Caco-2 (cell line): ENCODE measurements at regions of chr12 and their contacts with region 1.

Region 1: DNA sequence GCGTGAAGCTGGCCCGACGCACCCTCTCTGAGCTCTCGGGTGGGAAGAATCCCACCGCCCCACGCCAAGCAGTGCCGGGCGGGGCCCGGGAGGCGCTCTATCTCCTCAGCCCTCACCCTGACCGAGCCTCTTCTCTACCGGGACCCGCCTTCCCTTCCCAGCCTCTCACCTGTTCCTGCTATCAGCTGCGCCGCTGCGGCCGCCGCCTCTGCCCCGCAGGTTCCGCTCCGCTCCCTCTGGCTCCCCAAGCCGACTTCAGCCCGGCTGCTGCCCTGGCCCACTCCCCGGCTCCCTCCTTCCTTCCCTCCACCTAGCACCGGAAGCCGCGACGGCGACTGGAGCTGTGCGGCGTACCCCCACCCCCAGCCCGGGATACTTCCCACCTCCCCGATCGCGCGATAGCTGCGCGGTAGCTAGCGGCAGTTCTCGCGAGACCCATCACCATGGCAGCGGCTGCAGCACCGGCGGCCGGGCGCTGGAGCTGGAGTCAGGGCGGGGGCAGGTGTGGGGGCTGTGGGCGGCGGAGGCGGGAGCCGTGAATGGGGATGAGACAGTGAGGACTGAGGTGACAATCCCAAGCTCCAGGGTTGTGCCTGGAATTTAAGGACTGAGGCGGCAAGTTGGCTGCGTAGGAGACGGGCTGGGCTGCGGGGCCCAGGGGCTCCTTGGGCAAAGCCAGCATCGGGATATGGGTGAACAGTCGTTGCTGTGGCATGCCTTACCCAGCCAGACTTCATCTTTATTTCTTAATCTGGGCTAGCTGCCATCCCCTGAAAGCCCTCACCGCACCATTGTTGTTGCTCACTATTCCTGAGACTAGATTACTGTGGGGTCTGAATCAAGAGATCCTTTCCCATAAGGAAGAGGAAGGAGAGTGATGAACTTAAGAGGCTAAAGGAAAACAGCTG is at the start of gene ARF3:
- DNase-seq: peak; percentile 97 to 98
- H3K4me3 ChIP-seq: peak within 1 kb of the TSS; percentile 79
- H3K4me3 Mint-ChIP-seq: peak within 1 kb of the TSS; percentile 89
- H3K27ac Mint-ChIP-seq: peak within 1 kb of the TSS; percentile 87
- H3K4me1 ChIP-seq: peaks cover 8% of the 10 kb centered on the region; the same call in 1 of the 2 replicates
- H3K4me1 Mint-ChIP-seq: peaks cover 13% of the 10 kb centered on the region
- H3K27me3 ChIP-seq: no peaks in the 10 kb centered on the region
- H3K27me3 Mint-ChIP-seq: no peaks in the 10 kb centered on the region
- CTCF ChIP-seq: no peak
- total RNA-seq, gene ARF3: 249 and 257 TPM in 2 replicates

Region 2: DNA sequence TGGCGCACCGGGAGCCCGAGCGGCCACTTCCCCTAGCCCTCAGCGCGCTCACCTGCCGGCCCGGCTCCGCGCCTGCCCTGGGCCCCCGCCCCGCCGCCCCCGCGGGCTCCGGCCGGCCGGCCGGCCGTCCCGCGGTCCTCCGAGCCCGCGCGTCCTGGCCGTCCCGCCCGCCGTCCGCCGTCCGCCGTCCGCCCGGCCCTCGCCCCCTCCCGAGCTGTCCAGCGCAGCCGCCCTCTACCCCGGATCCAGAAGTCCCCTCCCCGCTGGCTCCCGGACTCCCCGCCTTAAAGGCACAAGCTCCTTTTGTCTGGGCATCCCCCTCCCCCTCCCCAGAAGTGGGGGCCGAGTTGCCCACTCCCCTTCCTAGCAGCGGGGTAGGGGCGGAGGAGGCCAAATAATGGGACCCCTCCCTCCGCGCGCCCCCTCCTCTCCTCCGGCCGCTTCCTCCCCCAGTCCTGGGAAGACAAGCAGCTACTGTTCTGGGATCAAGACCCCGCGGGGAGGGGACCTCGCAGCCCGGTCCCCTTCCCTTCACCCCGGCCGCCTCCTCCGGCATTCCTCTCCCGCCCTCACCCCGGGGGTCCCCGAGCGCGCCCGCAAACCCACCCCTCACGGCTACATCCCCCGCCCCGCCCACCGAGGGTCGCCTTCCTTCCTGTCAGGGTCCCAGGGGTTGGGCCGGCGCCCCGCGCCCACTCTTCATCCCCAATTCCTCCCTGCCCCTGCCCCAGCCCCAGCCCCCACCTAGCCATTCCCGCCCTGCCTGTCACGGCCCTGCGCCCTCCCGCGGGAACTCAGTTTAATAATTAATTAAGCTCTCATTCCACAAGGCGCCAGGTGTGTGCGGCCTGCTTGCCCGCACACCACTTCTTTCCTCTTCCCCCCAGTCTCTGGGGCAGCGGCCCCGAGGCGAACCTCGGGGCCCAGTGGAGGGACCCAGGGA is 168.3 kb before region 1 on chr12 and contains the start of gene ADCY6:
- CTCF ChIA-PET with region 1: no interaction called
- POLR2A ChIA-PET with region 1: interaction called, 11 read pairs
- intact Hi-C with region 1: no loop called
- DNase-seq: peak; percentile 94
- H3K4me3 ChIP-seq: peak within 1 kb of the TSS; percentile 88
- H3K4me3 Mint-ChIP-seq: peak within 1 kb of the TSS; percentile 84
- H3K27ac Mint-ChIP-seq: peak within 1 kb of the TSS; percentile 91
- H3K4me1 ChIP-seq: peaks cover 29% of the 10 kb centered on the region
- H3K4me1 Mint-ChIP-seq: peaks cover 13% of the 10 kb centered on the region
- H3K27me3 ChIP-seq: no peaks in the 10 kb centered on the region
- H3K27me3 Mint-ChIP-seq: no peaks in the 10 kb centered on the region
- CTCF ChIP-seq: no peak
- total RNA-seq, gene ADCY6: 89.8 and 92.9 TPM in 2 replicates

Region 3: DNA sequence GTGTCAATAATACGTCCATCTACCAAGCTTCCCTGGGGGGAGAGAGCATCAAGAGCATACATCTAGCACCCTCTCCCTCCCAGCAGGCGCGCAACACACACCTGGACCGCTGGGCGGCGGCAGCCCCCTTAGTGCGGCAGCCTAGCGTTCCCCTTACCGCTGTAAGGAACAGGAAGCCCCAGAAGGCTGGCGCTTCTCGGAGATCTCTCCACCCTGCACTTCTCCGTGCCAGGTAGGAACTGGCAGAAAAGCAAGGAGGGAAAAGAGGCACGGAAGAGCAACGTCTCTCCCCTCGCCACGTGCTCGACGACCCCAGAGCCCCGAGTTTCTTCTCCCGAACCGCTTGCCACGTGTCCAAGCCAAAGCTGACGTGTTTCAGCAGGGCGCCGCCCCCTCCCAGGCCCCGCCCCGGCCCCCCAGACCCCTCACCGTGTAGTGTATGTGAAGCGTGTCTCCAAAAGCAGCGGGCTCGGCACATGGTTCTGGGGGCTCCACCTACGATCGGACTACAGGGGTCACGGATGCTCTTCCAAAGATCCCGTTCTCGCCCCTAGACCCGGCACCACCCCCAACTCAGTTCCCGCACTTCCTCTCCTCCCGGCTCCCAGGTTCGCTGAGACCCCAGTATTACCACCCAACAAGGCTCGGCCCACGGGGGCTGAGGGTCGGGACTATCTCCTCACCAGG is 32.6 kb before region 1 on chr12:
- CTCF ChIA-PET with region 1: interaction called, 12 read pairs
- POLR2A ChIA-PET with region 1: interaction called, 3 read pairs
- intact Hi-C with region 1: no loop called
- DNase-seq: peak; percentile 81 to 85
- H3K4me3 ChIP-seq: peak overlapping the region; percentile 73
- H3K4me3 Mint-ChIP-seq: peak overlapping the region; percentile 83
- H3K27ac Mint-ChIP-seq: peak overlapping the region; percentile 76
- H3K4me1 ChIP-seq: peaks cover 5% of the 10 kb centered on the region; the same call in 1 of the 2 replicates
- H3K4me1 Mint-ChIP-seq: no peaks in the 10 kb centered on the region
- H3K27me3 ChIP-seq: no peaks in the 10 kb centered on the region
- H3K27me3 Mint-ChIP-seq: no peaks in the 10 kb centered on the region
- CTCF ChIP-seq: peak; percentile 72 to 96

Region 4: GRCh38 chr12:48977315-48978281 is 20.2 kb after region 1 on chr12:
- CTCF ChIA-PET with region 1: interaction called, 17 read pairs
- POLR2A ChIA-PET with region 1: interaction called, 4 read pairs
- intact Hi-C with region 1: loop called (anchors 2 kb)
- DNase-seq: peak; percentile 61 to 86
- H3K4me3 ChIP-seq: peak overlapping the region; percentile 48
- H3K4me3 Mint-ChIP-seq: peak overlapping the region; percentile 0
- H3K27ac Mint-ChIP-seq: no peak overlapping the region
- H3K4me1 ChIP-seq: peaks cover 23% of the 10 kb centered on the region
- H3K4me1 Mint-ChIP-seq: peaks cover 17% of the 10 kb centered on the region
- H3K27me3 ChIP-seq: peaks cover 14% of the 10 kb centered on the region
- H3K27me3 Mint-ChIP-seq: peaks cover 23% of the 10 kb centered on the region
- CTCF ChIP-seq: peak; percentile 79 to 91

Region 5: DNA sequence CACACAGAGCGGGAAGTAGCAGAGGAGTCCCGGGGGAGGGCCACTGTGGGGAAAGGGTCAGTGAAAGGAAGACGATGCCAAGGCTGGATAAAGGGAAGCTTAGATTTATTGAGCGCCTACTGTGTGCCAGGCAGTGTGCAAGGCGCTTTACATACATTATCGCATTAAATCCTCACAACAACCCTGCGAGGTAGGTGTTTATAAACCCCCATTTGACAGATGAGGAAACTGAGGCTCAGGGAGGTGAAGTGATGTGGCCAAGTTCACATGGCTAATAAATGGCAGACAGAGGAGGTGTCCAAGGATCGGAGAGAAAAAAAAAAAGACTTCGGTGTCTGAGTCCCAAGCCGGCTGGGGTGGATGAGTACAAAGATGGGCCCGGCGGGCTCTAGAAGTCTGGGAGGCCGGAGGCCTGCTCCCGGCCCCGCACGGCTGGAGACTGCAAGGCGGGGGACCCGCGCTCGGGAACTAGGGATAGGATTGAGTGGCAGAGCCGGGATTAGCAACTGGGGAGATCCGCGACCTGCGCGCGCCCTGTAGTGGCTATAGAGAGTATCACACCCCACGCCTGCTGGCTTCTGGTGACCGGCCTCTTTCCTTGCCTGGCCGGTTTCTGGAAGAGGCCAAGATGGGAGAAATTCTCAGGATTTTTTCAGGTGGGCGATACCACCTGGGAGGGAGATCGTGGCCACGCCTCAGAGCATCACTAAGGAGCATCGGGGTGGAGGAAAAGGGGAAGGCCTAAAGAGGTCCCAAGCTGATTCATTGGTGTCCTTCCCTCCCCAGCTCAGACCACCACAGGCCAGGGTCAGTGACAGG is 37.9 kb after region 1 on chr12:
- CTCF ChIA-PET with region 1: interaction called, 23 read pairs
- POLR2A ChIA-PET with region 1: interaction called, 3 read pairs
- intact Hi-C with region 1: no loop called
- DNase-seq: peak; percentile 93 to 96
- H3K4me3 ChIP-seq: no peak overlapping the region
- H3K4me3 Mint-ChIP-seq: peak overlapping the region; percentile 59
- H3K27ac Mint-ChIP-seq: peak overlapping the region; percentile 5
- H3K4me1 ChIP-seq: peaks cover 28% of the 10 kb centered on the region
- H3K4me1 Mint-ChIP-seq: peaks cover 28% of the 10 kb centered on the region
- H3K27me3 ChIP-seq: no peaks in the 10 kb centered on the region
- H3K27me3 Mint-ChIP-seq: no peaks in the 10 kb centered on the region
- CTCF ChIP-seq: peak; percentile 93 to 95